CD4-positive, alpha-beta memory T cell (primary cell): ENCODE measurements at regions of chr19 and their contacts with region 1.

Region 1: DNA sequence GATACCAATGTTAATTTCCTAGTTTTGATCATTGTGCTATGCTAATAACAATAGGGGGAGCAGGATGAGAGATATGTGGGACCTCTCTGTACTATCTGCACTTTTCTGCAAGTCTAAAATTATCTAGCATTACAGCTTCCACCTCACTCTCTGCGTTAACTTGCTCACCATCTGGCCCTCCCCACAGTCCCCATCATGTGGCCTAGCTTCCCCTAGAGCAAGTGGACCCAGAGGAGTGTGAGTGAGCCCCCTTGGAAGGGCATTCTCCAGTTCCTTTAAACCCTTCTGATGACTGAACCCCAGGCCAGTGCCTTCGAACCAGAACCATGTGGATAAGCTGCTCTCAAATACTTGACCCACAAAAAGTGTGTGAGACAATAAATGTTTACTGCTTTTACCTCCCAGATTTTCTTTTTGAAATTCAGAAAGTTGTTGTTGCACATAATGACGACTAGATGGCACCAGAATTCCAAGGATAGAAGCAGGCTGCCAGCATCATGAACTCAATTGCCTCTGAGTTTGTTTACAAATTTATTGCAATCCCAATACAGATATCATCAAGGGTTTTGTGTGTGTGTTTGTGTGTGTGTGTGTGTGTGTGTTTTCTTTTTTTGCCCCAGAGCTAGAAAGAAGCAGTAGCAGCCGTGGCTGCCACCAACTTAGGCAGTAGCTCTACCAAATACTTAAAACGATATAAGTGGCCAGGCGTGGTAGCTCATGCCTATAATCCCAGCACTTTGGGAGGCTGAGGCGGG is 49.0 kb upstream of the ZNF780A start:
- DNase-seq: peak in 4 of 5 donors; percentile 51 to 59 (median 56)
- H3K4me3 ChIP-seq: no peak overlapping the region
- H3K4me3 Mint-ChIP-seq: peak overlapping the region in 1 of 8 donors; percentile 39
- H3K27ac ChIP-seq: no peak overlapping the region
- H3K27ac Mint-ChIP-seq: peak overlapping the region in 3 of 7 donors; percentile 18 to 52 (median 29)
- H3K4me1 ChIP-seq: peaks cover 24% of the 10 kb centered on the region
- H3K4me1 Mint-ChIP-seq: peaks cover 12 to 29% (median 21%) of the 10 kb centered on the region in 4 donors
- H3K27me3 ChIP-seq: no peaks in the 10 kb centered on the region
- H3K27me3 Mint-ChIP-seq: peaks cover 2 to 5% of the 10 kb centered on the region in 2 donors

Region 2: DNA sequence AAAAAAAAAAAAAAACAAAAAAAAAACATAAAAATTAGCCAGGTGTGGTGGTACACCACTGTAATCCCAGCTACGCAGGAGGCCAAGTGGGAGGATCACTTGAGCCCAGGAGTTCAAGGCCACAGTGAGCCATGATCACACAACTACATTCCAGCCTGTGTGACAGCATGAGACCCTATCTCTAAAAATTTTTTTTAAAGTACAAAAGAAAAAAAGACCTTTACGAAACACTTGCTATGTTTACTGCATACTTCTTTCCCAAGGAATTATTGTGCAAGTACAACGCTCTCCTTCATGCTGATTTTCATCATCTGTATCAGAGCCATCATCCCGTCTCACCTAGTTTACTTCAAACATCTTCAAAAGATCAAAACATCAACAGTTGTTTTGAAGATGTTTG is 20.3 kb before region 1 on chr19:
- CTCF ChIA-PET with region 1: no interaction called
- POLR2A ChIA-PET with region 1: no interaction called
- intact Hi-C with region 1: no loop called
- DNase-seq: no peak
- H3K4me3 ChIP-seq: no peak overlapping the region
- H3K4me3 Mint-ChIP-seq: no peak overlapping the region
- H3K27ac ChIP-seq: no peak overlapping the region
- H3K27ac Mint-ChIP-seq: no peak overlapping the region
- H3K4me1 ChIP-seq: no peaks in the 10 kb centered on the region
- H3K4me1 Mint-ChIP-seq: peaks cover 0 to 4% (median 0%) of the 10 kb centered on the region in 4 donors
- H3K27me3 ChIP-seq: no peaks in the 10 kb centered on the region
- H3K27me3 Mint-ChIP-seq: peaks cover 15 to 19% of the 10 kb centered on the region in 2 donors

Region 3: DNA sequence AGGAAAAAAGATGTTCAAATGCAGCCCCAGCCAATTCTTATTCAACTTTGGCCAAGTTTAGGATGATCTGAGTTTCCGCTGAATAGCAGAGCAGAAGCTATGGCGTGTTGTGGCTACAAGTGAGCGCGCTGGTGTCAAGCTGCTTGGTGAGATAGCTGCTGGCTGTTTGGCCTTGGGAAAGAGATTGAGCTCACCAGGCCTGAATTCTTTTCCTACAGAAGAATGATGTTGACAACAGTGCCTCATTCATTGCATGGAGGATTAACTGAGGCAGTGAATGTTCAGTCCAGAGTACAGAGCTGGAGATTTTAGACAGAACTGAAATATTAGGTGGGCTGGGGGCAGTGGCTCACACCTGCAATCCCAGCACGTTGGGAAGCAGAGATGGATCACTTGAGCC is 20.0 kb after region 1 on chr19:
- CTCF ChIA-PET with region 1: interaction called, 45 read pairs
- POLR2A ChIA-PET with region 1: interaction called, 6 read pairs
- intact Hi-C with region 1: no loop called
- DNase-seq: no peak
- H3K4me3 ChIP-seq: no peak overlapping the region
- H3K4me3 Mint-ChIP-seq: no peak overlapping the region
- H3K27ac ChIP-seq: no peak overlapping the region
- H3K27ac Mint-ChIP-seq: peak overlapping the region in 2 of 7 donors; percentile 27 to 42
- H3K4me1 ChIP-seq: peaks cover 6% of the 10 kb centered on the region
- H3K4me1 Mint-ChIP-seq: peaks cover 8 to 21% (median 10%) of the 10 kb centered on the region in 4 donors
- H3K27me3 ChIP-seq: no peaks in the 10 kb centered on the region
- H3K27me3 Mint-ChIP-seq: no peaks in the 10 kb centered on the region

Region 4: GRCh38 chr19:40190891-40191835 is 51.5 kb after region 1 on chr19 and contains the start of gene MAP3K10:
- CTCF ChIA-PET with region 1: interaction called, 8 read pairs
- POLR2A ChIA-PET with region 1: interaction called, 6 read pairs
- intact Hi-C with region 1: loop called (anchors 10 kb)
- DNase-seq: peak; percentile 67 to 77 (median 70)
- H3K4me3 ChIP-seq: peak within 1 kb of the TSS; percentile 66 to 95
- H3K4me3 Mint-ChIP-seq: peak within 1 kb of the TSS; percentile 87 to 94 (median 91)
- H3K27ac ChIP-seq: peak within 1 kb of the TSS; percentile 96
- H3K27ac Mint-ChIP-seq: peak within 1 kb of the TSS; percentile 92 to 98 (median 96)
- H3K4me1 ChIP-seq: peaks cover 19% of the 10 kb centered on the region
- H3K4me1 Mint-ChIP-seq: peaks cover 22 to 40% (median 29%) of the 10 kb centered on the region in 4 donors
- H3K27me3 ChIP-seq: no peaks in the 10 kb centered on the region
- H3K27me3 Mint-ChIP-seq: no peaks in the 10 kb centered on the region
- total RNA-seq, gene MAP3K10: 28.4 to 30.2 TPM

Region 5: GRCh38 chr19:40305403-40305802 is 165.7 kb after region 1 on chr19:
- CTCF ChIA-PET with region 1: interaction called, 19 read pairs
- POLR2A ChIA-PET with region 1: no interaction called
- intact Hi-C with region 1: loop called (anchors 5 kb)
- DNase-seq: peak; percentile 66 to 73 (median 71)
- H3K4me3 ChIP-seq: no peak overlapping the region
- H3K4me3 Mint-ChIP-seq: no peak overlapping the region
- H3K27ac ChIP-seq: no peak overlapping the region
- H3K27ac Mint-ChIP-seq: no peak overlapping the region
- H3K4me1 ChIP-seq: no peaks in the 10 kb centered on the region
- H3K4me1 Mint-ChIP-seq: peaks cover 0 to 5% (median 2%) of the 10 kb centered on the region in 4 donors
- H3K27me3 ChIP-seq: no peaks in the 10 kb centered on the region
- H3K27me3 Mint-ChIP-seq: no peaks in the 10 kb centered on the region

Region 6: DNA sequence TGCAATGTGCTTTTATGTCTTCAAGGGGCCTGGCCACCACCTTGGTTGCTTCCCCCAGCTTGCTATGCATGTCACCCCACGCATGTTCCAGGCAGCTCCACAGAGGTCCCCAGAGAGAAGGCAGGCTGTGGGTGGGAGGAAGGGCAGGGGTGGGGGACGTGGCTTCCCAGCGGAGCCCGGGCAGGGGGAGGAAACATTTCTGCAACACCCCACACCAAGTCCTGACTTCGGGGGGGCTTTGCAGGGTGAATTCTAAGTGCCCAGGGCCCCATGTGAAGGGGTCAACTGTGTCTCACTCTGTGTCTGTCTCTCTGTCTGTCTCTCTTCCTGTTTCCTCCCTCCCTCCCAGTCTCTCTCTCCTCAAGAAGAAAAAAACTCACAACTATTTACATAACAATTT is 501.0 kb after region 1 on chr19:
- CTCF ChIA-PET with region 1: interaction called, 12 read pairs
- POLR2A ChIA-PET with region 1: no interaction called
- intact Hi-C with region 1: no loop called
- DNase-seq: no peak
- H3K4me3 ChIP-seq: no peak overlapping the region
- H3K4me3 Mint-ChIP-seq: no peak overlapping the region
- H3K27ac ChIP-seq: no peak overlapping the region
- H3K27ac Mint-ChIP-seq: peak overlapping the region in 1 of 7 donors; percentile 61
- H3K4me1 ChIP-seq: no peaks in the 10 kb centered on the region
- H3K4me1 Mint-ChIP-seq: peaks cover 0 to 3% (median 2%) of the 10 kb centered on the region in 4 donors
- H3K27me3 ChIP-seq: no peaks in the 10 kb centered on the region
- H3K27me3 Mint-ChIP-seq: peaks cover 2 to 4% of the 10 kb centered on the region in 2 donors